GM12878 (cell line): ENCODE measurements at regions of chr17 and their contacts with region 1.

Region 1: DNA sequence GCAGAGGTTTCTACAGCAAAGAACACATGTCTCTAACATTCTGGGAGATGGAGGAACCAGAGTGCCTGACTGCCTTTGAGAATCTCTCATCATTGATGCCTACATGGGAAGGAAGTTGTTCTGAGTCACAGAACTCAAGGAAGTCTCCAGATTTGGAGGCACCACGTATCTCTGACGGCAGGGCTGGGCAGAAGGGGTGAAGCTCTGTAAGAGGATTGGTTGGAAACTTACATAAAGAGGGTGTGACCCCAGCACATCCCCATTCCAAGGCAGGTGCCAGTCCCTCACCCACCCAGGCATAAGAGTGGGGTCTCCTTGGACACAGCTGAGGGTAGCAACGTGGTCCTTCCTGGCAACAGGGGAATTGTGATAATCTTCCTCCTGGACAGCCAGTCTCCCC is 17.4 kb downstream of the TNFRSF13B start:
- DNase-seq: no peak
- ATAC-seq: no peak
- H3K4me3 ChIP-seq: no peak overlapping the region
- H3K27ac ChIP-seq: peak overlapping the region; percentile 64
- H3K4me1 ChIP-seq: peaks cover 38% of the 10 kb centered on the region
- H3K27me3 ChIP-seq: no peaks in the 10 kb centered on the region
- CTCF ChIP-seq: no peak
- EP300 ChIP-seq: no peak
- POLR2A ChIP-seq: no peak
- RAD21 ChIP-seq: no peak

Region 2: GRCh38 chr17:16968786-16969185 is 14.3 kb after region 1 on chr17:
- CTCF ChIA-PET with region 1: no interaction called
- POLR2A ChIA-PET with region 1: interaction called, 4 read pairs
- RAD21 ChIA-PET with region 1: interaction called, 913 read pairs
- SMC1A ChIA-PET with region 1: interaction called, 10 read pairs
- in situ Hi-C with region 1: no loop called
- intact Hi-C with region 1: no loop called
- DNase-seq: no peak
- ATAC-seq: peak; percentile 8
- H3K4me3 ChIP-seq: peak overlapping the region; percentile 94
- H3K27ac ChIP-seq: peak overlapping the region; percentile 92
- H3K4me1 ChIP-seq: peaks cover 31% of the 10 kb centered on the region
- H3K27me3 ChIP-seq: no peaks in the 10 kb centered on the region
- CTCF ChIP-seq: no peak
- EP300 ChIP-seq: no peak
- POLR2A ChIP-seq: no peak
- RAD21 ChIP-seq: no peak

Region 3: GRCh38 chr17:17028059-17028877 is 73.7 kb after region 1 on chr17:
- CTCF ChIA-PET with region 1: no interaction called
- POLR2A ChIA-PET with region 1: no interaction called
- RAD21 ChIA-PET with region 1: no interaction called
- SMC1A ChIA-PET with region 1: no interaction called
- in situ Hi-C with region 1: no loop called
- intact Hi-C with region 1: no loop called
- DNase-seq: no peak
- ATAC-seq: peak; percentile 44
- H3K4me3 ChIP-seq: no peak overlapping the region
- H3K27ac ChIP-seq: no peak overlapping the region
- H3K4me1 ChIP-seq: no peaks in the 10 kb centered on the region
- H3K27me3 ChIP-seq: no peaks in the 10 kb centered on the region
- CTCF ChIP-seq: no peak
- EP300 ChIP-seq: no peak
- POLR2A ChIP-seq: no peak
- RAD21 ChIP-seq: no peak